Colonic mucosa (tissue), 4 donors: ENCODE measurements at regions of chr16 and their contacts with region 1.

Region 1: GRCh38 chr16:28943281-28943680 is 7.5 kb upstream of the NFATC2IP start:
- DNase-seq: no peak
- H3K4me3 ChIP-seq: no peak overlapping the region
- H3K27ac ChIP-seq: no peak overlapping the region
- H3K4me1 ChIP-seq: peaks cover 4% of the 10 kb centered on the region
- H3K27me3 ChIP-seq: no peaks in the 10 kb centered on the region
- CTCF ChIP-seq: no peak

Region 2: GRCh38 chr16:28623172-28623711 is 320.0 kb before region 1 on chr16:
- intact Hi-C with region 1: no loop called
- DNase-seq: peak; percentile 80
- H3K4me3 ChIP-seq: peak overlapping the region; percentile 51
- H3K27ac ChIP-seq: no peak overlapping the region
- H3K4me1 ChIP-seq: no peaks in the 10 kb centered on the region
- H3K27me3 ChIP-seq: no peaks in the 10 kb centered on the region
- CTCF ChIP-seq: no peak

Region 3: GRCh38 chr16:28823872-28824716 is 119.2 kb before region 1 on chr16:
- intact Hi-C with region 1: loop called (anchors 10 kb)
- DNase-seq: peak; percentile 97
- H3K4me3 ChIP-seq: peak overlapping the region; percentile 99
- H3K27ac ChIP-seq: peak overlapping the region; percentile 100
- H3K4me1 ChIP-seq: peaks cover 15% of the 10 kb centered on the region
- H3K27me3 ChIP-seq: no peaks in the 10 kb centered on the region
- CTCF ChIP-seq: peak; percentile 18

Region 4: DNA sequence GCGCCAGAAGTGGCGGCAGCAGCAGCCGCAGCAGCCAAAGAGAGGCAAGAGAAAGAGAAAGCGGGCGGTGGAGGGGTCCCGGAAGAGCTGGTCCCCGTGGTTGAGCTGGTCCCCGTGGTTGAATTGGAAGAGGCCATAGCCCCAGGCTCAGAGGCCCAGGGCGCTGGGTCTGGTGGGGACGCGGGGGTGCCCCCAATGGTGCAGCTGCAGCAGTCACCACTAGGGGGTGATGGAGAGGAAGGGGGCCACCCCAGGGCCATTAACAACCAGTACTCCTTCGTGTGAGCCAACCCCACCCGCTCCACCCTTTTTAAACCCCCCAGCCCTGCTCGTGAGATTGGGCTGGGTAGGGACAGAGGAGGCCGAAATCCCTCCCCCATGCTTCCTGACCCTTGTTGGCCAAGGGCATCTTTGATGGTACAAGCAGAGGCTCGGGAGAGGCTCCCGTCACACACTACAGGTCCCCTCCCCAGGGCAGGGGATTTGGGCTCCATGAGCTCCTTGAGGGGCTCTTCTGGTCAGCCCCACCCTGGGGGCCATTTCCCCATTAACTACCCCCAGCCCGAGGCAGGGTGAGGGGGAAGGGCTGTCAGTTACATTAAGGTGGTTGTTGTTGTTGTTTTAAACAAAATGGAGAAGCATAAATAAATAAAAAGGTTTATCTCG is 69.6 kb before region 1 on chr16:
- intact Hi-C with region 1: loop called (anchors 5 kb)
- DNase-seq: no peak
- H3K4me3 ChIP-seq: no peak overlapping the region
- H3K27ac ChIP-seq: no peak overlapping the region
- H3K4me1 ChIP-seq: no peaks in the 10 kb centered on the region
- H3K27me3 ChIP-seq: no peaks in the 10 kb centered on the region
- CTCF ChIP-seq: peak; percentile 70

Region 5: GRCh38 chr16:28999577-28999976 is 56.3 kb after region 1 on chr16:
- intact Hi-C with region 1: no loop called
- DNase-seq: no peak
- H3K4me3 ChIP-seq: no peak overlapping the region
- H3K27ac ChIP-seq: no peak overlapping the region
- H3K4me1 ChIP-seq: no peaks in the 10 kb centered on the region
- H3K27me3 ChIP-seq: no peaks in the 10 kb centered on the region
- CTCF ChIP-seq: no peak